ENCODE measurements at regions of chr12 and their contacts with region 1.

Region 1: GRCh38 chr12:810671-811415 is 58.5 kb downstream of the WNK1 start:
- DNase-seq: no peak
- ATAC-seq: peak; percentile 49
- H3K4me3 Mint-ChIP-seq: no peak overlapping the region
- H3K27ac Mint-ChIP-seq: no peak overlapping the region
- H3K4me1 Mint-ChIP-seq: peaks cover 70% of the 10 kb centered on the region
- H3K27me3 Mint-ChIP-seq: no peaks in the 10 kb centered on the region

Region 2: GRCh38 chr12:262817-263216 is 548.0 kb before region 1 on chr12 and contains the start of gene SLC6A13:
- CTCF ChIA-PET with region 1: no interaction called
- POLR2A ChIA-PET with region 1: no interaction called
- DNase-seq: no peak
- ATAC-seq: no peak
- H3K4me3 Mint-ChIP-seq: no peak within 1 kb of the TSS
- H3K27ac Mint-ChIP-seq: no peak within 1 kb of the TSS
- H3K4me1 Mint-ChIP-seq: peaks cover 14% of the 10 kb centered on the region
- H3K27me3 Mint-ChIP-seq: peaks cover 14% of the 10 kb centered on the region
- total RNA-seq, gene SLC6A13: 0.26 TPM in 1 of 2 experiments, not detected in the other

Region 3: GRCh38 chr12:563250-563781 is 247.5 kb before region 1 on chr12:
- CTCF ChIA-PET with region 1: interaction called, 28 read pairs
- POLR2A ChIA-PET with region 1: no interaction called
- DNase-seq: peak; percentile 83
- ATAC-seq: peak; percentile 85
- H3K4me3 Mint-ChIP-seq: peak overlapping the region; percentile 68
- H3K27ac Mint-ChIP-seq: peak overlapping the region; percentile 90
- H3K4me1 Mint-ChIP-seq: peaks cover 79% of the 10 kb centered on the region
- H3K27me3 Mint-ChIP-seq: no peaks in the 10 kb centered on the region

Region 4: GRCh38 chr12:569803-570434 is 240.9 kb before region 1 on chr12:
- CTCF ChIA-PET with region 1: interaction called, 69 read pairs
- POLR2A ChIA-PET with region 1: no interaction called
- DNase-seq: peak; percentile 91
- ATAC-seq: peak; percentile 97
- H3K4me3 Mint-ChIP-seq: peak overlapping the region; percentile 80
- H3K27ac Mint-ChIP-seq: peak overlapping the region; percentile 73
- H3K4me1 Mint-ChIP-seq: peaks cover 57% of the 10 kb centered on the region
- H3K27me3 Mint-ChIP-seq: no peaks in the 10 kb centered on the region

Region 5: GRCh38 chr12:614411-614970 is 196.4 kb before region 1 on chr12:
- CTCF ChIA-PET with region 1: interaction called, 43 read pairs
- POLR2A ChIA-PET with region 1: no interaction called
- DNase-seq: peak; percentile 46
- ATAC-seq: no peak
- H3K4me3 Mint-ChIP-seq: no peak overlapping the region
- H3K27ac Mint-ChIP-seq: no peak overlapping the region
- H3K4me1 Mint-ChIP-seq: peaks cover 72% of the 10 kb centered on the region
- H3K27me3 Mint-ChIP-seq: no peaks in the 10 kb centered on the region

Region 6: GRCh38 chr12:674272-674781 is 136.5 kb before region 1 on chr12:
- CTCF ChIA-PET with region 1: interaction called, 14 read pairs
- POLR2A ChIA-PET with region 1: no interaction called
- DNase-seq: peak; percentile 82
- ATAC-seq: peak; percentile 92
- H3K4me3 Mint-ChIP-seq: peak overlapping the region; percentile 61
- H3K27ac Mint-ChIP-seq: peak overlapping the region; percentile 94
- H3K4me1 Mint-ChIP-seq: peaks cover 70% of the 10 kb centered on the region
- H3K27me3 Mint-ChIP-seq: no peaks in the 10 kb centered on the region

Region 7: DNA sequence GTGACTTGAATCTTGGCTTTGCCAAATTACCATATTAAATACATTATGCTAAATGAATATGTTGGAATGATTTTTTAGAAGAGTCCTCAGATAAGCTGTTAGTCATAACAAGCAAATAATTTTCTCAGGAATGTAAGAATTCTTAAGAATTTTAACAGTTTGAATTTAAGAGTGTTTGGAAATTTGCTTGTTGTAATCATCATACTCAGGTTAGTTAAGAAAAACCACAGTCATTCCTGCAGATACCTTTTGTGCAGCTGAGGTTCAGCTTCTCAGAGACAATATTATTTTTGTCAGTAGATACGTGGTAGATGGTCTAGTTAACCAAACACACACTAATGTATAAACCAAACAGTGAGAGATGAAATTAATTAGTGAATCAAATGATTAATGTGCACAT is 49.6 kb before region 1 on chr12:
- CTCF ChIA-PET with region 1: interaction called, 43 read pairs
- POLR2A ChIA-PET with region 1: no interaction called
- DNase-seq: no peak
- ATAC-seq: no peak
- H3K4me3 Mint-ChIP-seq: no peak overlapping the region
- H3K27ac Mint-ChIP-seq: no peak overlapping the region
- H3K4me1 Mint-ChIP-seq: peaks cover 53% of the 10 kb centered on the region
- H3K27me3 Mint-ChIP-seq: no peaks in the 10 kb centered on the region

Region 8: GRCh38 chr12:779745-780734 is 30.8 kb before region 1 on chr12:
- CTCF ChIA-PET with region 1: interaction called, 30 read pairs
- POLR2A ChIA-PET with region 1: no interaction called
- DNase-seq: no peak
- ATAC-seq: no peak
- H3K4me3 Mint-ChIP-seq: peak overlapping the region; percentile 50
- H3K27ac Mint-ChIP-seq: no peak overlapping the region
- H3K4me1 Mint-ChIP-seq: peaks cover 53% of the 10 kb centered on the region
- H3K27me3 Mint-ChIP-seq: no peaks in the 10 kb centered on the region

Region 9: DNA sequence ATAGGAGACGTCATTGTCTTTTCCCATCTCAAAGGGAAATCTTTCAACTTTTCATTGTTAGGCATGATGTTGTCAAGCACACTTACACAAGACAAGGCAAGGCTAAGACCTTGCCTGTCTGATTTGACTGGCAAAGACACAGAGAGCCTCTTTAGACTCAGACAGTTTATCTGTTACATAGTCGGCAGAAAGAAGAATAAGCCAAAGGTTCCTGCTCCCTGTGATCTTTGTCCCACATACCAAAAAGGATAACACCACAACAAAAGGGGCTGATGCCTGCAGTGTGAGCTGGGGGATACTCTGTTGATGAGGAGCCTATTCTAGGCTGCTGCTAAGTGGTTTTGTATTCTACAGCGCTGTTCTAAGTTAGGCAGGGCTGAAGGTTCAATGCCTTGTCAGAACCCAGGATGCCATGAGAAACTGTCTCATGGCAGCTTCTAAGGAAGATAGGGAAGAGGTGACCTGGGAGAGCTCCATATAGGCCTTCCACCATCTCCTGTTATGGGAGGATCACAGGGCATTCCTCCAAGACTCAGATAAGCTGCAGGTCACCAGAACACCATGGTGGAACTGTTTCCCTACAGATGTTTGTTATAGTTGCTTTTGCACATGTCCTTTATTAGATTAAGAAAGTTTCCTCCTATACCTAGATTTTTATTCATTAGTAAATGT is 192.9 kb after region 1 on chr12:
- CTCF ChIA-PET with region 1: no interaction called
- POLR2A ChIA-PET with region 1: no interaction called
- DNase-seq: no peak
- ATAC-seq: no peak
- H3K4me3 Mint-ChIP-seq: no peak overlapping the region
- H3K27ac Mint-ChIP-seq: no peak overlapping the region
- H3K4me1 Mint-ChIP-seq: no peaks in the 10 kb centered on the region
- H3K27me3 Mint-ChIP-seq: no peaks in the 10 kb centered on the region